Endothelial cell of umbilical vein (primary cell): ENCODE measurements at regions of chr3 and their contacts with region 1.

Region 1: DNA sequence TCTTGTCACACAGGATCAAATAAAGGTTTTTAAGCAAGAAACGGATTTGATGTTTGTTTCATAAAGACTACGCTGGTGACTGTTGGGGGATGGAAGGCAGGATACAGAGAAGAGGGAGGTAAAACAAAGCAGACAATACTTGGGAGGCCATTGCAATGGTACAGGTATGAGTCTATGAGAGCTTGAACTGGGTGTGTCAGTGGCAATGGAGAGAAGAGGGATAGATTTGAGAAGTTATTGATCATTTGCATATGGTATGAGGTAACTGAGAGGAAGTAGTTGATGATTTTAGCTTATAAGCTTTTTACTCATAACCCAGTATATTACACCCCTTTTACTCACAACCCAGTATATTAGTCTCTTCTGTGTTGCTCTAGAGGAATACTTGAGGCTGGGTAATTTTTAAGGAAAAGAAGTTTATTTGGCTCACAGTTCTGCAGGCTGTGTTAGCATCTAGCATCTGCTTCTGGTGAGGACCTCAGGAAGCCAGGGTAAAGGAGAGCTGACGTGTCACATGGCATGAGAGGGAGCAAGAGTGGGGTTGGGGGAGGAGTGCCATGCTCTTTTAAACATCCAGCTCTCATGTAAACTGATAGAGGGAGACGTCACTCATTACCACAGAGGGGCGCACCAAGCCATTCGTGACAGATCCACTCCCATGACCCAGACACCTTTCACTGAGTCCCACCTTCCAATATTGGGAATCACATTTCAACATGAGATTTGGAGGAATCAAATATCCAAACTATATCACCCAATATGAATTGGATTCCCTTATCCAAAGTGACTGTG is 153.9 kb downstream of the VPS8 start:
- DNase-seq: no peak
- H3K4me3 ChIP-seq: no peak overlapping the region
- H3K27ac ChIP-seq: no peak overlapping the region
- H3K4me1 ChIP-seq: no peaks in the 10 kb centered on the region
- H3K27me3 ChIP-seq: no peaks in the 10 kb centered on the region
- CTCF ChIP-seq: no peak
- POLR2A ChIP-seq: no peak

Region 2: DNA sequence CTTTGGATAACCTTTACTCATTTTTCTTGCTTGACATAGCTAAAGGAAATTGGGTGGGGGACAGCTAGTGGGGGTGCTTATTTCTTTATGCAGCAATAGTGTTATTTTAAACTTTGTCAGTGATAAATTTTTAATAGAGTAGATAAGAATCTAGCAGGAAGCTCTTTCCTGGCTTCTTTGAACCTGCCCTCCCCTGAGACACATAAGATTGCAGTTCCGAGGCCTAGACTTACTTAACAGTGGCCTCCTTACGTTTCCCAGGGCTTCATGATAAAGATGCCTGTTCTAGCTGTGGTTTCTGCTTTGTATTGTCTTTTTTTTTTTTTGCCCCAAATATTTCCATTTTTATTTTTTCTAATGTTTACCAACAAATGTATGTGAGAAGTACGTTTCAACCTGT is 16.2 kb after region 1 on chr3:
- CTCF ChIA-PET with region 1: no interaction called
- POLR2A ChIA-PET with region 1: no interaction called
- dilution Hi-C with region 1: no loop called
- intact Hi-C with region 1: loop called (anchors 2 kb)
- DNase-seq: no peak
- H3K4me3 ChIP-seq: no peak overlapping the region
- H3K27ac ChIP-seq: no peak overlapping the region
- H3K4me1 ChIP-seq: peaks cover 2% of the 10 kb centered on the region
- H3K27me3 ChIP-seq: no peaks in the 10 kb centered on the region
- CTCF ChIP-seq: no peak
- POLR2A ChIP-seq: no peak

Region 3: GRCh38 chr3:185059766-185060165 is 93.9 kb after region 1 on chr3:
- CTCF ChIA-PET with region 1: no interaction called
- POLR2A ChIA-PET with region 1: no interaction called
- dilution Hi-C with region 1: no loop called
- intact Hi-C with region 1: no loop called
- DNase-seq: no peak
- H3K4me3 ChIP-seq: no peak overlapping the region
- H3K27ac ChIP-seq: no peak overlapping the region
- H3K4me1 ChIP-seq: peaks cover 3% of the 10 kb centered on the region
- H3K27me3 ChIP-seq: no peaks in the 10 kb centered on the region
- CTCF ChIP-seq: no peak
- POLR2A ChIP-seq: no peak

Region 4: GRCh38 chr3:185225523-185225922 is 259.7 kb after region 1 on chr3:
- CTCF ChIA-PET with region 1: no interaction called
- POLR2A ChIA-PET with region 1: no interaction called
- dilution Hi-C with region 1: no loop called
- intact Hi-C with region 1: no loop called
- DNase-seq: no peak
- H3K4me3 ChIP-seq: no peak overlapping the region
- H3K27ac ChIP-seq: no peak overlapping the region
- H3K4me1 ChIP-seq: no peaks in the 10 kb centered on the region
- H3K27me3 ChIP-seq: no peaks in the 10 kb centered on the region
- CTCF ChIP-seq: no peak
- POLR2A ChIP-seq: no peak